ENCODE measurements at regions of chr3 and their contacts with region 1.

Region 1: GRCh38 chr3:100880072-100880471 is 113.1 kb downstream of the ABI3BP start:
- DNase-seq: no peak
- CTCF ChIP-seq: no peak

Region 2: DNA sequence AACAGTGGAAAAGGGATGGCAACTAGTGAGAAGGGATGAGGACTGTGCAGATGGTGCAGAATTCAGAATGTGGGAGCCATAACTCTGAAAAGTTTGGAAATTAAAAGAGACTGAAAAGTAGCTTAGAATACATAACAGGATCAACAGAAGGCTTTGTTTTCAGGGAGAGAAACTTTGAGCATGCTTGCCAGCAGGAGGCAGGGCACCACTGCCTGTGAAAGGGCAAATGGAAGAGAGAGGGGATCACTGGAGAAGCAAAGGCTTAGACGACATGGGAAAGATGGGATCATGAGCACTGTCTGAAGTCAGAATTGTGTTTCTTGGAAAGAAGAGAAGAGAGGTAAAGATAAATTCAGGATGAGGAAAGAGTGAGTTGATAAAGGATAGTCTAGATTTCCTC is 13.5 kb after region 1 on chr3:
- CTCF ChIA-PET with region 1: interaction called, 10 read pairs
- POLR2A ChIA-PET with region 1: no interaction called
- DNase-seq: no peak
- CTCF ChIP-seq: no peak

Measured in GM10248 (cell line).